Dorsolateral prefrontal cortex (tissue), 120 donors: ENCODE measurements at regions of chr3 and their contacts with region 1.

Region 1: GRCh38 chr3:101809178-101810021 is 30.4 kb downstream of the NXPE3 start:
- DNase-seq: no peak
- H3K4me3 ChIP-seq: no peak overlapping the region
- H3K27ac ChIP-seq: peak overlapping the region in 19 of 59 donors; percentile 3 to 74 (median 26)
- H3K27me3 ChIP-seq: no peaks in the 10 kb centered on the region
- CTCF ChIP-seq: peak; percentile 38 to 85 (median 73)

Region 2: DNA sequence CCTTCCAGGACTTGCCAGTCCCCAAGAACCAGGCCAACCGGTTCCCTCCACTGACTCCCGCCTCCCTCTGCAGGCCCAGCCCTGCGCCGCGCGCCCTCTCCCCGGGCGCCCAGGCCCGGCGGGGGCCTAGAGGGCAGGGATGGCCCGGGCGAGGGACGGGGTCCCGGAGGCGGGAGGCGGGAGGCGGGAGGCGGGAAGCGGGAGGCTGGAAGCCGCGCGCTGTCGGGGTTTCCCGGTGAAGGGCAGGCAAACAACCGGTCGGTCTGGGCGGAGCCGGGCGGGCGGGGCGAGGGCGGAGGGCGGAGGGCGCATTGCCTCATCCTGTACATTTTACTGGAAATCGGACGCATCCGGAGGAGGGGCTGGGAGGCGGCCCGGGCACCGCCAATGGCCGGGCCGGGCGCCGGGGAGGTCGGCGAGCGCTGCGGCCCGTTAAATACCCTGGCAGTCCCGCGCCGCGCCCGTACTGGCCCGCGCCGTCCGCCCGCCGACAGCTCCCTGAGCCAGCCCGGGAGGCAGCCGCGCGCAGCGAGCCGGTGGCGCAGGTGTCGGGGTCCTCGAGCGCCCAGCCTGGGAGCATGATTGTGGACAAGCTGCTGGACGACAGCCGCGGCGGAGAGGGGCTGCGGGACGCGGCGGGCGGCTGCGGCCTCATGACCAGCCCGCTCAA is 39.8 kb after region 1 on chr3 and contains the start of gene NFKBIZ:
- intact Hi-C with region 1: loop called in 1 of 2 experiments (anchors 5 kb)
- DNase-seq: peak; percentile 81 to 94 (median 86)
- H3K4me3 ChIP-seq: peak within 1 kb of the TSS; percentile 64 to 95 (median 86)
- H3K27ac ChIP-seq: peak within 1 kb of the TSS; percentile 71 to 99 (median 95)
- H3K27me3 ChIP-seq: no peaks in the 10 kb centered on the region
- CTCF ChIP-seq: peak in 10 of 56 donors; percentile 2 to 36 (median 6)
- total RNA-seq, gene NFKBIZ: 4.6 to 36.6 (median 15.2) TPM

Region 3: GRCh38 chr3:102536456-102536855 is 727.1 kb after region 1 on chr3:
- intact Hi-C with region 1: loop called (anchors 5 to 10 kb)
- DNase-seq: no peak
- H3K4me3 ChIP-seq: peak overlapping the region in 10 of 59 donors; percentile 5 to 45 (median 16)
- H3K27ac ChIP-seq: no peak overlapping the region
- H3K27me3 ChIP-seq: peaks cover 0 to 14% (median 0%) of the 10 kb centered on the region in 45 donors
- CTCF ChIP-seq: peak; percentile 18 to 83 (median 63)